ENCODE measurements at regions of chr7 and their contacts with region 1.

Region 1: DNA sequence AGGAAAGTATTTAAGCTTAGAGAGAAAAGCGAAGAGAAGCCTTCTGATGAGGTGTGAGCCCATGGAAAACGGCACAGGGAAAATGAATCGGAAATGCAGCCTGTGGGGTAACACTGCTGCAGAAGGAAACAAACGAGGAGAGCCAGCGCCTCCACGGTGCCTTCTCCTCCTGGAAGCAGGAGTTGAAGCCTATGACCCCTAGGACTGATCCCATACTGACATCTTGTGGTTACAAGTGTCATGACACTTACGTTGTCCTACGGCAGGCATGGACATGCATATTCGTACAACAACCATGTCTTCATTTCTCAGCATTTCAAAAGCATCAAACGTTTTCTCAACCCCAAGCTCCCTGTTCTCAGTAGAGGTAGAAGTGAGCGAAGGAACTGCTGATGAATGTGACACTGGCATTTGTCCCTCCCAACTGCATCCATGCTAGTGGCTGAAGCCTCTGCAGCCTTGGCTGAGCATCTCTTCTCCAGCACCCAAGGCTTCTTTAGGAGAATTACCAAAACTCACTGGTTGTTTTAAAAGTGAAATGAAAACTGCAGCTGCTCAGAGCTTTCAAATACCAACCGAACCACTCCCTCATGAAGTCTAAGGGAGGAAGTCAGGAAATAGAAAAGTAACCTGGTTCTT is 160.2 kb downstream of the JAZF1 start:
- DNase-seq: peak; percentile 39
- H3K4me3 Mint-ChIP-seq: no peak overlapping the region
- H3K27ac Mint-ChIP-seq: no peak overlapping the region
- H3K4me1 Mint-ChIP-seq: peaks cover 2% of the 10 kb centered on the region
- H3K27me3 Mint-ChIP-seq: no peaks in the 10 kb centered on the region

Region 2: GRCh38 chr7:27210441-27211083 is 809.9 kb before region 1 on chr7:
- CTCF ChIA-PET with region 1: interaction called, 5 read pairs
- POLR2A ChIA-PET with region 1: no interaction called
- intact Hi-C with region 1: loop called (anchors 2 kb)
- DNase-seq: peak; percentile 63
- H3K4me3 Mint-ChIP-seq: no peak overlapping the region
- H3K27ac Mint-ChIP-seq: no peak overlapping the region
- H3K4me1 Mint-ChIP-seq: peaks cover 14% of the 10 kb centered on the region
- H3K27me3 Mint-ChIP-seq: peaks cover 86% of the 10 kb centered on the region

Region 3: DNA sequence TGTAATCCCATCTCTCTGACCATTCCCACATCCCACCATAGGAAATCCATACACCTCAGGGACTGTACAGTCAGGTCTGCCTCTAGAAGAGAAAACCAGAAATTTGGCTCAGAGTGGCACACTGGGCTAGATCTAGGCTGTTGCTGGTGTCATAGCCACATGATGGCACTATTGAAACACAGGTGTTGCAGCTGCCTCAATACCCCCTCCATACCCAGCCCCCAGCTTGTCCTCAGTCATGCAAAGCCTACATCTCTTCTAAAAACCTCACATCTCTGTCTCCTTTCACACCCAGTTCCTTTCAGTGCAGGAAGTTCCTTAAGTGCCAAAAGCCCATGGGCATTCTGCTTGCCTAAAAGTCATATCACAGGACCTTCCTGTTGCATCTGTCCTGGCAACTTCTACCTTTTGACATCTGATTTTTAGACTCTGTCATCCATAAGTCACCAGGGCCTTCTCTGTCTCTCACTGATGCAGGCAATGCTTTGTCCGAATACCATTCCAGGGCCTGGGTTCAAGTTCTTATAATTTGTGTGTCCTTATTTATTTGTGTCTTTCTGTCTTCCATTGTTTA is 330.7 kb before region 1 on chr7:
- CTCF ChIA-PET with region 1: no interaction called
- POLR2A ChIA-PET with region 1: no interaction called
- intact Hi-C with region 1: loop called (anchors 5 kb)
- DNase-seq: peak; percentile 24
- H3K4me3 Mint-ChIP-seq: no peak overlapping the region
- H3K27ac Mint-ChIP-seq: no peak overlapping the region
- H3K4me1 Mint-ChIP-seq: no peaks in the 10 kb centered on the region
- H3K27me3 Mint-ChIP-seq: peaks cover 11% of the 10 kb centered on the region

Region 4: GRCh38 chr7:27972276-27972675 is 48.1 kb before region 1 on chr7:
- CTCF ChIA-PET with region 1: interaction called, 3 read pairs
- POLR2A ChIA-PET with region 1: no interaction called
- intact Hi-C with region 1: loop called (anchors 2 kb)
- DNase-seq: peak; percentile 19
- H3K4me3 Mint-ChIP-seq: peak overlapping the region; percentile 28
- H3K27ac Mint-ChIP-seq: no peak overlapping the region
- H3K4me1 Mint-ChIP-seq: peaks cover 20% of the 10 kb centered on the region
- H3K27me3 Mint-ChIP-seq: no peaks in the 10 kb centered on the region

Region 5: DNA sequence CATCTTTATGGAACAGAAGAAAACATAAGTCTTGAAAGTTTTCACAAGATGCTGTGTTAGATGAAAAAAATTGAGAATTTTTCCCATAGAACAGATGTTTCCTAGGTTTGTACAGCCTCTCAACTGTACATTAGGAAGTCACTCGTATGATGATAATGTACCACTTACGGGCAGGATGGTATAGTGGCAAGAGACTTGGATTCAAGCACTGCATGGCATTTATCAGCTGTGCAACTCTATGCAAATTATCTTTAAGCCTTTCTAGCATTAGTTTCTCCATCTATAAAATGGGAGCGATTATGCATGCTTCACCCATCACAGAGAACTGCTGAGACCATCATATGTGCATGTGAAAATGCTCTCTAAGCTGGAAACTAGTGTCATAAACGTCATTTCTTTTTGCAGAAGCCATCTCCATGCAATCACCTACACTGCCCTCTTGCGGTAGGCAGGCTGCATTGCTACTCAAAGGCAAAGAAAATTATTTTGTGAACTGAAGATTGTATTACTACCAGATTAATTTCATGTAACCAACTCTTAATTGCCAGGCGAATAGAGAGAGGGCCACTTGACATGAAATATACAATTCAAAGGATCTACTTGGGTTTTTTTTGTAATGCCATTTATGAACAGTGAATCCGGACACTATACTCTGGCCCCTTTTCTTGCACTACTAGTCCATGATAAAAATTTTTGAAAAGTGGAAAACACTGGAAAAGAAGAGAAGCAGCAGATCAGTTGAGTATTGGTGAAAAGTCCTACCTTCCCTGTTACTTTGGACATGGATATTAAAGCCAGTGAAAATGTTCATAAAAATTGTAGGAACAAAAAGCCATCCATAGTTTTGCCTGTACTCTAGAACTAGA is 57.8 kb after region 1 on chr7:
- CTCF ChIA-PET with region 1: interaction called, 20 read pairs
- POLR2A ChIA-PET with region 1: no interaction called
- intact Hi-C with region 1: no loop called
- DNase-seq: peak; percentile 60
- H3K4me3 Mint-ChIP-seq: no peak overlapping the region
- H3K27ac Mint-ChIP-seq: no peak overlapping the region
- H3K4me1 Mint-ChIP-seq: peaks cover 5% of the 10 kb centered on the region
- H3K27me3 Mint-ChIP-seq: no peaks in the 10 kb centered on the region

Region 6: DNA sequence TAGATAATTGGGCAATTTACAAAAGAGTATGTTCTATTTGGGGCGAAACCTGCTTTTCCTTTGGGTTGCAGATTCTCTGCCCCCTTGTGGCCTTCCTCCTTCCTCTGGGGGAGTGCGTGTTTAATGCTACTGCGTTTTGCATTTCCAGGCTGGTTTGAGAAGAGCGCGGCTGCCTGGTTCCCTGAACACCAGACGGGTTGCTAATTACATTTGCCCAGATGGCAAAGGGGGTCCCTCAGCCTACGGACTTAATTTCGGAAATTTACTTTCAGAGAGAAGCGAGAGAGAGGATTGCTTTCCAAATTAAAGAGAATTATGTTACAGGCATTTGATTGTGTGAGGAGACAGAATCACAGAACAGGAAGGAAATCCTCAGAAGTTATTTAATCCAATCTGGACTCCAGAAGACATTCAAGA is 252.0 kb after region 1 on chr7:
- CTCF ChIA-PET with region 1: no interaction called
- POLR2A ChIA-PET with region 1: no interaction called
- intact Hi-C with region 1: no loop called
- DNase-seq: peak; percentile 23
- H3K4me3 Mint-ChIP-seq: no peak overlapping the region
- H3K27ac Mint-ChIP-seq: no peak overlapping the region
- H3K4me1 Mint-ChIP-seq: peaks cover 7% of the 10 kb centered on the region
- H3K27me3 Mint-ChIP-seq: peaks cover 42% of the 10 kb centered on the region